A673 (cell line): ENCODE measurements at regions of chr1 and their contacts with region 1.

Region 1: DNA sequence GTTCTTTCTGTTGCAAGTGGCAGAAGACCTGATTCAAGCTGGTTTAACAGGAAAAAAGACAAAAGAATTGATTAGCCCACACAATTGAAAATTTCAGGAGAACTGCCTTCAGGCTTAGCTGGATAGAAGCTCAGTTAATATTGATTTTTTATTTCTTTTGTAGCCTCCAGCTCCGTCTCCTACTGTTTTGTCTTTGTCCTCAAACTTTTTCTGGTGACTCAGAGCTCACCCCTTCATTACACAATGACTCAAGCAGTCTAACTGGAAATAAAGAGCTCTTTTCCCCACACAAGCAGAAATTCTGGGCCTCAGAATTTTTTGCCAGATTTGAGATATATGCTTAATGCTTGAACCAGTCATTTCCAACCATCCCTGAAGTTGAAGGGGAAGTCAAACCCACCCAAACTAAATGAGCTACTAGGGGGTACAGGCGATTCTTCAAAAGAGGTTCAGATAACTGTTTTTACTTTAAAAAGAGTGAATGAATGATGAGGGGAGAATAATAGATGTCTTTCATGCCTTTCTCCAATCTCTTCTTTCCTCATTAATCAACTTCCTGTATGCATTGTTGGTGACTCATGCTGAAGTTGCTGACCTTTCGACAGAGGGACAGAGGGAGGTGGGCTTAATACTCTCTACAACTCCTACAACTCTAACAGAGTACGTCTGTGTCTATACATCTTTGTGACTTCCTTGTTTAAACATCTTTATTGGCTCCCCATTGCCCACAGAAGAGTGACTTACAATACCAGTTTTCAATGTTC is 6.1 kb upstream of the ACP6 start:
- DNase-seq: peak; percentile 86
- H3K4me3 ChIP-seq: no peak overlapping the region
- H3K27ac ChIP-seq: peak overlapping the region; percentile 34
- H3K4me1 ChIP-seq: peaks cover 27% of the 10 kb centered on the region
- H3K27me3 ChIP-seq: no peaks in the 10 kb centered on the region
- CTCF ChIP-seq: no peak

Region 2: GRCh38 chr1:147084273-147085096 is 592.0 kb before region 1 on chr1:
- CTCF ChIA-PET with region 1: no interaction called
- POLR2A ChIA-PET with region 1: interaction called, 19 read pairs
- intact Hi-C with region 1: no loop called
- DNase-seq: peak; percentile 93
- H3K4me3 ChIP-seq: peak overlapping the region; percentile 56
- H3K27ac ChIP-seq: peak overlapping the region; percentile 98
- H3K4me1 ChIP-seq: peaks cover 8% of the 10 kb centered on the region
- H3K27me3 ChIP-seq: no peaks in the 10 kb centered on the region
- CTCF ChIP-seq: no peak

Region 3: GRCh38 chr1:147515046-147515869 is 161.2 kb before region 1 on chr1:
- CTCF ChIA-PET with region 1: no interaction called
- POLR2A ChIA-PET with region 1: no interaction called
- intact Hi-C with region 1: no loop called
- DNase-seq: peak; percentile 42
- H3K4me3 ChIP-seq: no peak overlapping the region
- H3K27ac ChIP-seq: no peak overlapping the region
- H3K4me1 ChIP-seq: no peaks in the 10 kb centered on the region
- H3K27me3 ChIP-seq: no peaks in the 10 kb centered on the region
- CTCF ChIP-seq: peak; percentile 34; the same call in 1 of the 2 replicates